ENCODE measurements at regions of chr17 and their contacts with region 1.

Region 1: DNA sequence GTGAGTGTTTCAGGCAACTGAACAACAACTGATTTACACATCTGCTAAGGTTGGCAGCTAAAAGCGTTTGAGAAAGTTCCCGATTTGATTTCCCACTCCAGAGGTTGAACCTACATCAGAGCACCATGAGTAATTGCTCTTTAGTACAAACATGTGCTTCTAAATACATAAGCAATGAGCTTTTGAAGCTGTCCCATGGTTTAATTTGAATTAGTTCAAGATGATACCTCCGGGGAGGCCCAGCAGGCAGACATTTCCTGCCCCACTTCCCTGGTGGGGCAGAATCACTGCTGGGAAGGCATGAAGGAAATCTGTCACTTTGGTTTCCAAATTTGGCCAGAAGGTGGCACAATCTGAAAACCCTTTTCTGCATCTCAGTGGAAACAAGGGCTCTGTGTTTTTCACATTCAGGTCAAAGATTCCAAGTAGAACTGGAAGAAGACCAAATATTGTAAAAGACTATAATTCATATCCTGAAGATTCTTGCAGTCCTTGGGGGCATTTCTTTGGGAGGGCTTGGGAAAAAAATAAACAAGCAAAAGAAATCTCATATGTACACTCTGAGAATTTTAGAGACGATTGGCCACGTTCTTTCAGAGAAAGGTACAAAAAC is 176.2 kb upstream of the FAM20A start:
- DNase-seq: no peak

Region 2: DNA sequence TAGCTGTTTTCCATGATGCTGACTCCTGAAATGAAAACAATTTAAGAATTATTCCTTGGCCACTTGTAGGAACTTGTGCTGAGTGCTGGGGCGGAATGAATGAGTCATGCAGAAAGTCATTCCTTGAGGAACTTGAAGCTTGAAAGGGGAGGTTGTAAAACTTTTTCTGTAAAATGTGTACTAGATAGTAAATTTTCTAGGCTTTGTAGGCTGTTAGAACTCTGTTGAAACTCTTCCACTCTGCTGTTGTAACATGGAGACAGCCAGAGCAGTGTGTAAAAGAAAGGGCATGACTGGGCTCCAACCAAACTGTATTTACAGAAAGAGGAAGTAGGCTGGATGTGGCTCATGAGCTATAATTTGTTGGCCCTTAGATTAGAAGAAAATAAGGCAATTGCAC is 131.7 kb after region 1 on chr17:
- intact Hi-C with region 1: loop called (anchors 5 kb)
- DNase-seq: no peak

Region 3: GRCh38 chr17:68972119-68972704 is 194.9 kb after region 1 on chr17:
- intact Hi-C with region 1: loop called (anchors 5 kb)
- DNase-seq: no peak

Region 4: DNA sequence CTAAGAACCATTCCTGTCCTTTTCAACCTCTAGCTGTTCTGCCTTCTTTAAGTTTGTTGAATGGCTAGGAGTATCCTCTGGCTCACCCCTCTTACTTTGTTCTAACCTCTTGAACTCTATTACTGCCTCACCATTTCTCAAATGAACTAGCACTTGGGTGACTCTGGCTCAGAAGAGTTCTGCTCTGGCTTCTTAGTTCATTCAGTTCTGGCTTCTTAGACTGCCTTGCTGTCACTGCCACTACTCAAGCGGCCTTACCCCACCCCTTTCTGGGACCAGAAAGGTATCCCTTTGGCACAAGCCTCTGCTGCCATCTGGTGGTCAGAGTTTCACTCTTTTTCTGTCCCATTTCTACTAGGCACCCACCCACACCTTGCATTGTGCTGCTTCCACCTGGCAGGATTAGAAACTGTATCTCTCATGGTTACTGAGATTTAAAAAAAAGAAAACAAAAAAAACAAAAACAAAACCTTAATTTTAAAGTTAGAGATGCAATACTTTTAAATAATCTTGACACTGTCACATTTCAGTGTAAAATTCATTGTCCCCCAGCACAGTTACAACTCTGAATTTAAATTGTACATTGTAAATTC is 458.1 kb after region 1 on chr17:
- intact Hi-C with region 1: loop called (anchors 2 kb)
- DNase-seq: peak; percentile 84